IMR-90 (cell line): ENCODE measurements at regions of chr15 and their contacts with region 1.

Region 1: GRCh38 chr15:74648166-74648842 is 32.7 kb downstream of the CLK3 start:
- DNase-seq: no peak
- ATAC-seq: no peak
- H3K4me3 ChIP-seq: no peak overlapping the region
- H3K27ac ChIP-seq: no peak overlapping the region
- H3K4me1 ChIP-seq: peaks cover 2% of the 10 kb centered on the region; the same call in 1 of the 2 replicates
- H3K27me3 ChIP-seq: no peaks in the 10 kb centered on the region
- CTCF ChIP-seq: no peak
- POLR2A ChIP-seq: no peak
- RAD21 ChIP-seq: no peak

Region 2: GRCh38 chr15:74552773-74553441 is 95.4 kb before region 1 on chr15:
- CTCF ChIA-PET with region 1: no interaction called
- POLR2A ChIA-PET with region 1: no interaction called
- dilution Hi-C with region 1: no loop called
- in situ Hi-C with region 1: no loop called
- intact Hi-C with region 1: no loop called
- DNase-seq: no peak
- ATAC-seq: no peak
- H3K4me3 ChIP-seq: no peak overlapping the region
- H3K27ac ChIP-seq: no peak overlapping the region
- H3K4me1 ChIP-seq: no peaks in the 10 kb centered on the region
- H3K27me3 ChIP-seq: no peaks in the 10 kb centered on the region
- CTCF ChIP-seq: no peak
- POLR2A ChIP-seq: no peak
- RAD21 ChIP-seq: no peak

Region 3: GRCh38 chr15:74680456-74680855 is 32.2 kb after region 1 on chr15:
- CTCF ChIA-PET with region 1: no interaction called
- POLR2A ChIA-PET with region 1: no interaction called
- dilution Hi-C with region 1: no loop called
- in situ Hi-C with region 1: no loop called
- intact Hi-C with region 1: loop called (anchors 5 kb)
- DNase-seq: peak; percentile 23
- ATAC-seq: no peak; the same call in 1 of the 2 replicates
- H3K4me3 ChIP-seq: no peak overlapping the region
- H3K27ac ChIP-seq: no peak overlapping the region
- H3K4me1 ChIP-seq: no peaks in the 10 kb centered on the region
- H3K27me3 ChIP-seq: no peaks in the 10 kb centered on the region
- CTCF ChIP-seq: no peak
- POLR2A ChIP-seq: no peak
- RAD21 ChIP-seq: no peak